Mucosa of descending colon (tissue), 3 donors: ENCODE measurements at regions of chr6 and their contacts with region 1.

Region 1: GRCh38 chr6:8983188-8983688 is 547.9 kb upstream of the SLC35B3 start:
- DNase-seq: peak; percentile 49 to 71 (median 69)
- ATAC-seq: peak; percentile 92
- H3K4me3 ChIP-seq: no peak overlapping the region
- H3K4me1 ChIP-seq: no peaks in the 10 kb centered on the region
- CTCF ChIP-seq: peak; percentile 85

Region 2: DNA sequence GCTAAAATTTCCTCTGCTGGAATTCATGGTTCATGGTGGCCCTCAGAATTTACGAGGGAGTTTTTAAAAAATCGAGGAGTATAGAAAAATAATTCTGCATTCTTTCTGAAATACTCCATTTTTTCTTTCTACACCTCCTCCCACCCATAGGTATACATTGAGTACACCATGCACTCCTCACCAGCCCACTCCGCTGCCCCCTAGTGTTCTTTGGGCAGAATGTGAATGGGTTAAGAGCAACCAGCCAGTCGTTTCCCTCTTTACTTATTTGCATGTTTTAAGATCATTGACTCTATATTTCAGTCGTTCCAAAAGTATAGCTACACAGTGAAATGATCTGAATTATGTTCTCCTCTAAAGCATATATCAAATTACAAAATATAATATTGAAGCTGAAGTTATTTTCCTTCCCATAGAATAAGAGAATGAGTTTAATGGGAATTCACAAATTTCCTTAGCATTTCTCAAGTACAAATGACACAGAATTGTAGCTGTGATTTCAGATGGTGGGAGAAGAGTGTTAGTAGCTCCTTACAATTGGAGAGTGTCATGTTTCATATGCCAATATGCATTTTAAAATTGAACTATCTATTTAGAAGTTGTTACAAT is 429.8 kb after region 1 on chr6:
- intact Hi-C with region 1: loop called in 1 of 2 experiments (anchors 5 kb)
- DNase-seq: peak in 1 of 3 donors; percentile 55
- ATAC-seq: peak; percentile 54
- H3K4me3 ChIP-seq: no peak overlapping the region
- H3K4me1 ChIP-seq: no peaks in the 10 kb centered on the region
- CTCF ChIP-seq: peak; percentile 32

Region 3: DNA sequence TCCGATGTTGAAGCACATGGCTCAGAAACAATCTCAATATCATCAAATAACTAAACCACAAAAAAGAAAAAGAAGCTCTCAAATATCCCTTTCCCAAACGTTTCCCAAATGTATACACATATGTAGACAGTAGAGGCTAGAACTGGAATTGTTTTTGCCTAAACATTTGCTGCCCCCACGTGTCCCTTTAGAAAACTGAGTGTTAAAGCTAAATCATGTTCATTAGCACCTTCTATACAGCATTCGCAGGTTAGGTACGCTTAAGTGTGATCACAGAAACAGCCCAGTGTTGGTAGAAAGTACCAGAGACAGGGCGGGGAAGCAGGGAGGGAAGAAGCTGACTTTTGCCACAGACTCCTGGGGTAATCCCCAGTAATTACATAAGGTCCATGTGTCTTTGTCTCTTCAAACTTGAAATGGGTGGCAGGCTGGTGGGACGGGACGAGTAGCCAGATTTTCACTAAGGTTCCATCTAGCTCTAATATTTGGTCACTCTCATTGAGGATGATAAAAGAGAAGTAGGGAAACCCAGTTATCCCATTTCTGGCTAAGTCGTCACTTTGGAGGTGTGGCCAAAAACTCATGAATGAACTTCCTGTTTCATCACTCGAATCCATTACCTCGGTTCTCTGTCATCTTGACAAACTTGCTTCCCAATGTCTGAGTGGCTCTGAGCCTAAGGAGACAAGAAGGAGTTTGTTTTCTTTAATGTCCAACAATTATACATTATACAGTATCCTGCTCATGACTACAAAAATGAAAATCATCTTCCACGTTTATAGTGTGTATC is 1446.6 kb after region 1 on chr6:
- intact Hi-C with region 1: loop called (anchors 10 kb)
- DNase-seq: peak in 1 of 3 donors; percentile 59
- ATAC-seq: peak; percentile 74
- H3K4me3 ChIP-seq: no peak overlapping the region
- H3K4me1 ChIP-seq: peaks cover 14% of the 10 kb centered on the region
- CTCF ChIP-seq: no peak